PC-3 (cell line): ENCODE measurements at regions of chr2 and their contacts with region 1.

Region 1: DNA sequence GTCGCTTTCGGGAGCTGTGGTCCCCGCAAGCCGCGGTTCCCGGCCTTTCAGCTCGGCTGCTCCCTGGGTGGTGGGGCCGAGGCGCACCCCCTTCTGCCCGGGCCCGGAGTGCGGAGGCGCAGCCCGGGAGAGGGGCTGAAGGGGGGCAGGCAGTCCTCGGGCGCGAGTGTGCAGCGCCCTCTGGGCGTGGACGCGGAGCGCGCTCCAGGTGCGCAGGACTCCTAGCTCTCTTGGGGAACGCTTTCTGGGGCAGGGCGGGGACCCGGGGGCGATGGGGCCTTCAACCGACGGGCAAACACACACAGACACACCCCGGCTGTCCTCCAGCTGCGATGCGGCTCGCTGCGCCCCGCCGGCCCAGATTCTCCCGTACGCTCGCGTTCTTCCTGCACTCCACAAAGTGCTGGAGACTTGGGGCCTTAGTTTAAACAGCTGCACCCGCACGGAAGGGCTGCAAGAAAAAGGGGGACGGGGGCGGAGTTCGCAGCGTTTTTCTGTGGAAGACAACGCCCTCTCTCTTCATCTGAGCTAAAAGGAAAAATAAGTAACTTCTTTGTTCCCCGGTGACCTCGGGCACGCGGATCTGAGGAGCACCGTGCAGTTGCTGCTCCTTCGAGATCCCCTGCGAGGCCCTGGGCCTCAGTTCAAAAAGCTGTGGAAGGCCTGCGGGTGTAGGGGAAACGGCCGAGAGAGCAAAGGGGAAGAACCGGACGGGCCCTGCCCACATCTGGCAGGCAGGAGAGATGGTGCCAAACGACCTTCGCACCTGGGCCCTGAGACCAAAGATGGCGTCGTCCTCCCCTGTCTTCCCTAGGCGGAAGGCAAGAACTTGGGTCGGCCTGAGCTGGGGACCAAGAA is 593 bp upstream of the SDC1 start:
- DNase-seq: peak; percentile 78
- ATAC-seq: peak; percentile 70
- H3K4me3 ChIP-seq: peak overlapping the region; percentile 78
- H3K27ac ChIP-seq: peak overlapping the region; percentile 73
- H3K4me1 ChIP-seq: peaks cover 36% of the 10 kb centered on the region
- H3K27me3 ChIP-seq: no peaks in the 10 kb centered on the region
- CTCF ChIP-seq: peak; percentile 72

Region 2: DNA sequence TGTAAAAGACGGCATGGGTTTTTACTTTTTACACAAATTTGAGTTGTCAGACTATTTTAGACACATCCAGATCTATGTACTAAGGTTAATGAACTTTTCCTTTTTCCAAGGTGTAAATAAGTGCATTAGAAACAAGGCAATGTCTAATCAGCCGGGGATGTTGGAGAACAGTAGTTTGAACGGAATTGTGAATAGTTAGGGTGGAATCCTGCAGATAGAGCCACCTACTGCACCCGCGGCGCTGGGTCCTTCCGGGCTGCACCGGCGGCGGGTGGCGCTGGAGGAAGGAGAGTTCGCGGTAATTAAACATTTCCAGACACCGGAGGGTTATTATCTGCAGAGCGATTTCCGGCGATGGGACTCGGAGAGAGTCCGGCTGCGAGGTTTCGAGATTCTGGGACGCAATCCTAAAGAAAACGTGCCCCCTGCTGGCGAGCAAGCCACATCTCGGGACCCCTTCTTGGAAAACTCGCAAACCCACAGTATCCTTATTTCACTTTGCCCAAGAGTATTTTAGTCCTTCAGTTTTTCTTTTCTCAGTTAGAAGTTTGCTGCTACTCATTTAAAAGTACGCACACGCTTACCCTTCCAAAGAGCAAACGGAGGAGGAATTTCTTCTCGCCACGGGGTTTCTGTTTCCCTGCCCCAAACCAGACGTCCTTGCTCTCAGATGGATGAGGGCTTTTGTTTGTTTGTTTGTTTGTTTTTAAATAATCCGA is 862.6 kb before region 1 on chr2:
- CTCF ChIA-PET with region 1: no interaction called
- POLR2A ChIA-PET with region 1: no interaction called
- intact Hi-C with region 1: no loop called
- DNase-seq: peak; percentile 90
- ATAC-seq: peak; percentile 70
- H3K4me3 ChIP-seq: peak overlapping the region; percentile 89
- H3K27ac ChIP-seq: peak overlapping the region; percentile 21
- H3K4me1 ChIP-seq: peaks cover 23% of the 10 kb centered on the region
- H3K27me3 ChIP-seq: no peaks in the 10 kb centered on the region
- CTCF ChIP-seq: peak; percentile 89

Region 3: DNA sequence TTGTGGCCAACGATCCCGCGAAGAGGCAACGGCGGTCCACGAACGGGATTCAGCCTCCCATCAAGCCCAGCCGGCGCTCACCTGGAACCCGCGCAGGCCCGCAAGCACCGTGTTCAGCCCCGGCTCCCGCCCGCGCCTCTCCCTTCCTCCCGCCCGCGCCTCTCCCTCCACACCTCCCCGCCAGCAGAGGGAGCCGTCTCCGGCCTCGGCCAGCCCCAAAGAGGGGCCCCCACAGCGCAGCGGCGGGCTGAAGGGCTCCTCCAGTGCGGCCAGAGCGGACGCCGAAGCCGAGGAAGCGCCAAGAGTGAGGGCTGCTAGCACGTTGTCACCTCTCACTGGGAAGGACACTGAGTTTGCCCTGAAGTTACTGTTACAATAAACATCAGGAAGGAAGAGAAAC is 118.8 kb before region 1 on chr2:
- CTCF ChIA-PET with region 1: interaction called, 5 read pairs
- POLR2A ChIA-PET with region 1: no interaction called
- intact Hi-C with region 1: loop called (anchors 2 kb)
- DNase-seq: peak; percentile 71
- ATAC-seq: peak; percentile 83
- H3K4me3 ChIP-seq: peak overlapping the region; percentile 63
- H3K27ac ChIP-seq: no peak overlapping the region
- H3K4me1 ChIP-seq: peaks cover 28% of the 10 kb centered on the region
- H3K27me3 ChIP-seq: no peaks in the 10 kb centered on the region
- CTCF ChIP-seq: peak; percentile 71

Region 4: GRCh38 chr2:20135631-20136050 is 89.9 kb before region 1 on chr2:
- CTCF ChIA-PET with region 1: no interaction called
- POLR2A ChIA-PET with region 1: no interaction called
- intact Hi-C with region 1: loop called (anchors 1 kb)
- DNase-seq: peak; percentile 62
- ATAC-seq: peak; percentile 73
- H3K4me3 ChIP-seq: no peak overlapping the region
- H3K27ac ChIP-seq: no peak overlapping the region
- H3K4me1 ChIP-seq: no peaks in the 10 kb centered on the region
- H3K27me3 ChIP-seq: no peaks in the 10 kb centered on the region
- CTCF ChIP-seq: peak; percentile 80

Region 5: GRCh38 chr2:20146976-20147750 is 78.4 kb before region 1 on chr2:
- CTCF ChIA-PET with region 1: no interaction called
- POLR2A ChIA-PET with region 1: no interaction called
- intact Hi-C with region 1: no loop called
- DNase-seq: no peak
- ATAC-seq: no peak
- H3K4me3 ChIP-seq: no peak overlapping the region
- H3K27ac ChIP-seq: no peak overlapping the region
- H3K4me1 ChIP-seq: peaks cover 14% of the 10 kb centered on the region
- H3K27me3 ChIP-seq: no peaks in the 10 kb centered on the region
- CTCF ChIP-seq: no peak

Region 6: DNA sequence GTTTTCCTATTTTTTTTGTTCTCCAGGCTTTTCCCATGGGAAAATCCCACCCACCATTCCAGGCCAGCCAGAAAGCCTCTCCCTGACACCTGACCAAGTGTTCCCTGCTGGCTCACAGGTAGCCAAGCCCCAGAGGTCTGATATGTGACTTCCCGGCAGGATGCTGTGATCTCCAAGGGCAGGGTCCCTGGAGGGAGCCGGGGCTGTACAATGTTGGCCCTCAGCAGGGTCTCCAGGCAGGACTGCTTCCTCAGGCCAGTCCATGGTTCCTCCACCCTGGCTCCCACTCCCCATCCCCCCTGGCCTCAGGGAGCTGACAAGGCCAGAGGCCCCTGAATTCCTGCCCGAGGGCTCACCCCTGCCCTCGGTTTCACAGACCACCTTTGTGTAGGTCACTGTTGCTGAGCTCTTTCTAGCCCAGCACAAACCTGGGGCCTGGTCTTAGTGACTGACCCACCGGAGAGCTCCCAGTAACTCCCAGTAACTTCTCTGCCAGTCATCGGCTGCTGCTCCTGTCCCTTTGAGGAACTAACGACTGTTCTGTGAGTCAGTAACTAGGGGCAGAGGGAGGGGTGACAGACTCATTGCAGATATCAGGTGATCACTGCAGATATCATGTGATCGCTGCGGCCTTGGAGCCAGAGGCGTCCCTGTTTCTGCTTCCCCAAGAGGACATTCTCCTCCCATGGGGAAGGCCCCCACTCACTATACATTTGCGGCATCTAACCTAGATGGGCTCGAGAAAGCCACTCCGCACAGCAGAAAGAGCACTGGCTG is 39.3 kb before region 1 on chr2:
- CTCF ChIA-PET with region 1: interaction called, 4 read pairs
- POLR2A ChIA-PET with region 1: no interaction called
- intact Hi-C with region 1: loop called (anchors 2 kb)
- DNase-seq: peak; percentile 68
- ATAC-seq: peak; percentile 9; the same call in 1 of the 2 replicates
- H3K4me3 ChIP-seq: no peak overlapping the region
- H3K27ac ChIP-seq: peak overlapping the region; percentile 83
- H3K4me1 ChIP-seq: peaks cover 53% of the 10 kb centered on the region
- H3K27me3 ChIP-seq: no peaks in the 10 kb centered on the region
- CTCF ChIP-seq: no peak

Region 7: DNA sequence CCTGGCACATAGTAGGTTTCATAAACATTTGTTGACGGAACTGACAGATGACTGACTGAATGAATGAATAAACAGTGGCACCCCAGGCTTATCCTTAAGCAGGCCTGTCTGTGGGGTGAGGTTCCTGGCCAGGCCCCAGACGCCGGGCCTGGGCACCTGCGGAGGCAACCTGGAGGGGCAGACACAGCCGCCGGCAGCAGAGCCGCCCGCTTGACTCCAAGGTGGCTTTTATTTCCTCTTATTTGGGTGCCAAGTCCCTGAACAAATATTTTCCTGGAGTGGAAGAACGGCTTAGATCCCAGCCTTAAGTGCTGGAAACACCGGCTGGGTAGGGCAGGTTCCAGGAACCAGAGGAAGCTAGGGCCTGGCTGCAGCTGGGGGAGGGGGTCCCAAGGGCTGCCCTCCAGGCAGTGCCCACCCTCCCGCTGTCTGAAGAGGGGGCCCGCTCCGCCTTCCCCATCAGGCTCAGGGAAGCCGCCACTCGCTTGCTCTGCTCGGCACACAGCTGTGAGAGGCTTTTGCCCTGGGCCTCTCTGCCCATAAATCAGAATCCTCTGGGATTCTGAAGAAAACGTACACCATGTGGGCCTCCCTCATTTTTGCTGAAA is 28.9 kb before region 1 on chr2:
- CTCF ChIA-PET with region 1: no interaction called
- POLR2A ChIA-PET with region 1: interaction called, 10 read pairs
- intact Hi-C with region 1: no loop called
- DNase-seq: no peak
- ATAC-seq: no peak
- H3K4me3 ChIP-seq: no peak overlapping the region
- H3K27ac ChIP-seq: no peak overlapping the region
- H3K4me1 ChIP-seq: no peaks in the 10 kb centered on the region
- H3K27me3 ChIP-seq: no peaks in the 10 kb centered on the region
- CTCF ChIP-seq: no peak

Region 8: DNA sequence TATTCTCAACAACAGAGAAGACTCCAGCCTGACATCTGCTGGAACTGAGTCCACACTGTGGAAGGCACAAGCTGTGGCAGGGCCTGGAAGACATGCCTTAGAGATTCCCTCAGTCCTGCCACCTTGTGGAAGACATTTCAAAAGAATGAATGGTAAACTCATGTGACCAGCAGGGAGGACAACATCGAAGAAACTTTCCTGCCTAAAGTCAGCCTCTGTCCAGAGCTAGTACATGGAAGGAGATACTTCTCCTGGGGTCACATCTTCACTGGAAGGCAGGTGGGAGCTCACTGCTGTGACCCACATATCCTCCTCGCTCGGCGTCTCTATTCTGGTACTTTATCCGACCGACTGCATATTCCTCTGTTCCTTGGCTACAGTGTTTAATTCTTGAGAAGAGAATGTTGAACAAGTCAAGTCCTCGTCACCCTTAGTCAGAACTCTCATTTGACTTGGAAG is 65.6 kb after region 1 on chr2:
- CTCF ChIA-PET with region 1: interaction called, 11 read pairs
- POLR2A ChIA-PET with region 1: no interaction called
- intact Hi-C with region 1: no loop called
- DNase-seq: peak; percentile 93
- ATAC-seq: peak; percentile 100
- H3K4me3 ChIP-seq: no peak overlapping the region
- H3K27ac ChIP-seq: peak overlapping the region; percentile 2; the same call in 1 of the 2 replicates
- H3K4me1 ChIP-seq: peaks cover 15% of the 10 kb centered on the region
- H3K27me3 ChIP-seq: no peaks in the 10 kb centered on the region
- CTCF ChIP-seq: peak; percentile 84